Activated T-helper 2 cell treated with anti-CD3 and anti-CD28 coated beads, Interferon-gamma antibody, Interleukin-2, Interleukin-4, amounts not matched to agents 10 μg/mL and 5 μg/mL and 100 μg/mL, durations not matched to agents 14 hours and 24 hours and 36 hours (primary cell): ENCODE measurements at regions of chr18 and their contacts with region 1.

Region 1: DNA sequence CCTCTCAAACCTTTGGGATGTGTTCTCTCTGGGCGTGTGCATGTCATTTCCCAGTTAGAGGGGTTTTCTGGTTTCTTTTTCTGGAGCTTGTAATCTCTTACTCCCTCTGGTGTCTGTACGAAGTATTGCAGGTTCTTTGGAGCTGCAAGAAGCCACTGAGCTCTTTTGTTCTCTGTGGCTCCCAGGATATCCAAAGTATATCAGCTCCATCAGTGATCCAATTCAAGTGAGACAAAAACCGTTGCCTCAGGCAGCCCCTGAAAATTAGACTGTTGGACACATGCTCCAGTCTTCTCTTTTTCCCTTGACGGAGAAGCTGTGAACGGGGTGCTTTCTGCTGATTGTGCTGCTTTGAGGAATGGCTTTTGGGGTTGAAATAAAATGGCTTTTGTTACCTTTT is 59.0 kb upstream of the LDLRAD4 start:
- DNase-seq: no peak
- H3K4me3 Mint-ChIP-seq: no peak overlapping the region
- H3K27ac Mint-ChIP-seq: no peak overlapping the region
- H3K4me1 Mint-ChIP-seq: no peaks in the 10 kb centered on the region
- H3K27me3 Mint-ChIP-seq: peaks cover 15% of the 10 kb centered on the region

Region 2: DNA sequence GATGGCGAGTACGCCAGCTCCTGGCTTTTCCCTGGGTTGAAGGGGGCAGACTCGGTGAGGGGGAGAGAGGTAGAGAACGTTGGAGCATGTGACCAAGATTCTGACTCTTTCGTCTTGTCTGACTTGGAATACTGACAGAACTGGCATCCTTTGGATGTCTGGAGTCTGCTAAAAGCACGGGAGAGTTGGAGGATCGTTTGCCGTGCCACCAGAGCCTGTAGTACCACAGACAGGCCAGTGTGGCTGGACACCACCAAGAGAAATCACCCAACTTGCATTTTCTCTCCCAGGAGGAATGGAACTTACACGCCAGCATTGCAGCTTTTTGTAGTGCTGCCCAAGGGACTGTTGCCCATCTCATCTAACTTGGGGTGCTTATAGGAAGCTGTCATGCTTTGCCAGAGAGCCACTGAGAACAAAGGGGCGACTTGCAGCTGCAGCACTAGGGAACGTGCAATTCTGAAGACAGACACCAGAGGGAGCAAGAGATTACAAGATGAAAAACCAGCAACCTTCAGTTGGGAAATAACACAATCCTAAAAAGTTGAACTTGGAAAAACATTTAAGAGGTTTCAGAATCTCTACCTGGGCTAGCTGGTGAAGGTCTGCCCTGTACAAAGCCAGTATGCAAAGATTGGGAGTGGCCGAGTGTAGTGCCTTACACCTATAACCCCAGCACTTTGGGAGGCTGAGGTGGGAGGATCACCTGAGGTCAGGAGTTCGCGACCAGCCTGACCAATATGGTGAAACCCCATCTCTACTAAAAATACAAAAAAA is 432.6 kb before region 1 on chr18:
- intact Hi-C with region 1: loop called (anchors 2 kb)
- DNase-seq: peak; percentile 44
- H3K4me3 Mint-ChIP-seq: no peak overlapping the region
- H3K27ac Mint-ChIP-seq: no peak overlapping the region
- H3K4me1 Mint-ChIP-seq: peaks cover 4% of the 10 kb centered on the region
- H3K27me3 Mint-ChIP-seq: no peaks in the 10 kb centered on the region

Region 3: DNA sequence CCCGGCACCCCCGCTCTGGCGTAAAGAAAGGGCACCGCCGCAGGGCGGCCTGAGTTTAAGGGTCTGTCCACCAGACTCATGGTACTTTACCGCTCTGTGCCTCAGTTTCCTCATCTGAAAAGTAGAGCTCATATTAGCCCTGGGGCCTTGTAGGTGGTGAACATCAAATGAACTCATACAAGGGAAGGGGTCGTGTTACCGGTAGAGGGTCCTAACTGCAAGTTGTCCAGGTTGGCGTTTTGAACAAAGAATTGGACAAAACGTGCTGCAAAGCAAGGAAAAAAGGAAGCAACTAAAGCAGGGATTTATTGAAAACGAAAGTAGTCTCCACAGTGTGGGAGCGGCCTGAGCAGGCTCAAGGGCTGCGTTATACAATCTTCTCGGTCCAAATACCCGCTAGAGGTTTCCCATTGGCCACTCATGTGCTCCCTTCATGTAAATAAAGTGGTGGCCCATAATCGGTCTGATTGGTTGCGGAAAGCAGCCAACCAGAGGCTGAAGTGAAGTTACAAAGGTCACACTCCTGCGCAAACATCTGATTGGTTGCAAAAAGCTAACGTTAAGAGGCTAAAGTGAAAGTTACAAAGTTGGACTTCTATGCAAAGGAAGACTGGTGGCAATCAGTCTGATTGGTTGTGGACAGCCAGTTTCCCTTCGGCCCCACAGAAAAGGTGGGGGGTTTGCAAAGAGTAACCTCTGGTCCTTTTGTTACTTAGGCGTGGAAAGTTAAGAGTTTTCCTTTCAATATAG is 21.7 kb before region 1 on chr18:
- intact Hi-C with region 1: loop called (anchors 2 kb)
- DNase-seq: peak; percentile 76
- H3K4me3 Mint-ChIP-seq: peak overlapping the region; percentile 96
- H3K27ac Mint-ChIP-seq: peak overlapping the region; percentile 83
- H3K4me1 Mint-ChIP-seq: peaks cover 20% of the 10 kb centered on the region
- H3K27me3 Mint-ChIP-seq: peaks cover 12% of the 10 kb centered on the region

Region 4: GRCh38 chr18:13245481-13246000 is 86.0 kb after region 1 on chr18:
- intact Hi-C with region 1: no loop called
- DNase-seq: no peak
- H3K4me3 Mint-ChIP-seq: no peak overlapping the region
- H3K27ac Mint-ChIP-seq: no peak overlapping the region
- H3K4me1 Mint-ChIP-seq: no peaks in the 10 kb centered on the region
- H3K27me3 Mint-ChIP-seq: no peaks in the 10 kb centered on the region